ENCODE measurements at regions of chr5 and their contacts with region 1.

Region 1: DNA sequence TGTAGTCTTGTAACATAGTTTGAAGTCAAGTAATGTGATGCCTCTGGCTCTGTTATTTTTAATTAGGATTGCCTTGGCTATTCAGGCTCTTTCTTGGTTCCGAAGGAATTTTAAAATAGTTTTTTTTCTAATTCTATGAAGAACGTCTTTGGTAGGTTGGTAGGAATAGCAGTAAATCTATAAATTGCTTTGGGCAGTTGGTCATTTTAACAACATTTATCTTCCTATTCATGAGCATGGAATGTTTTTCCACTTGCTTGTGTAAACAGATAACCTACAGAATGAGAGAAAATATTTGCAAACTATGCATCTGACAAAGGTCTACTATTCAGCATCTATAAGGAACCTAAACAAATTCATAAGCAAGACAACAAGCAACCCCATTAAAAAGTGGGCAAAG is 173.2 kb upstream of the TRPC7 start:
- DNase-seq: no peak
- H3K4me3 Mint-ChIP-seq: no peak overlapping the region
- H3K27ac Mint-ChIP-seq: no peak overlapping the region
- H3K4me1 Mint-ChIP-seq: no peaks in the 10 kb centered on the region
- H3K27me3 Mint-ChIP-seq: peaks cover 38% of the 10 kb centered on the region
- CTCF ChIP-seq: no peak

Region 2: DNA sequence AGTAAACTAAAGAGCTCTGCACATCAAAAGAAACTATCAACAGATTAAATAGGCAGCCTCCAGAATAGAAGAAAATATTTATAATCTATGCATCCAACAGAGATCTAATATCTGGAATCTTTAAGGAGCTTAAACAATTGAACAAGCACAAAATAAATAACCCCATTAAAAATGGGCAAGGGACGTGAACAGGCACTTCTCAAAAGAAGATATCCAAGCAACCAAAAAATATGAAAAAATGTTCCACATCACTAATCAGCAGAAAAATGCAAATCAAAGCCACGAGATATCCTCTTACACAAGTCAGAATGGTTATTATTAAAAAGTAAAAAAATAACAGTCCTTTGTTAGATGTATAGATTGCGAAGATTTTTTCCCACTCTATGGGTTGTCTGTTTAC is 64.1 kb before region 1 on chr5:
- CTCF ChIA-PET with region 1: no interaction called
- POLR2A ChIA-PET with region 1: no interaction called
- intact Hi-C with region 1: loop called (anchors 10 kb)
- DNase-seq: no peak
- H3K4me3 Mint-ChIP-seq: no peak overlapping the region
- H3K27ac Mint-ChIP-seq: no peak overlapping the region
- H3K4me1 Mint-ChIP-seq: no peaks in the 10 kb centered on the region
- H3K27me3 Mint-ChIP-seq: peaks cover 63% of the 10 kb centered on the region
- CTCF ChIP-seq: no peak

Region 3: GRCh38 chr5:136655429-136655828 is 116.9 kb after region 1 on chr5:
- CTCF ChIA-PET with region 1: no interaction called
- POLR2A ChIA-PET with region 1: no interaction called
- intact Hi-C with region 1: no loop called
- DNase-seq: no peak
- H3K4me3 Mint-ChIP-seq: no peak overlapping the region
- H3K27ac Mint-ChIP-seq: no peak overlapping the region
- H3K4me1 Mint-ChIP-seq: no peaks in the 10 kb centered on the region
- H3K27me3 Mint-ChIP-seq: no peaks in the 10 kb centered on the region
- CTCF ChIP-seq: no peak